CD4-positive, alpha-beta T cell (primary cell): ENCODE measurements at regions of chr10 and their contacts with region 1.

Region 1: GRCh38 chr10:98956576-98957260 is 278.9 kb downstream of the HPSE2 start:
- DNase-seq: no peak
- ATAC-seq: no peak
- H3K4me3 ChIP-seq: no peak overlapping the region
- H3K4me3 Mint-ChIP-seq: no peak overlapping the region
- H3K27ac ChIP-seq: no peak overlapping the region
- H3K27ac Mint-ChIP-seq: no peak overlapping the region
- H3K4me1 ChIP-seq: no peaks in the 10 kb centered on the region
- H3K4me1 Mint-ChIP-seq: no peaks in the 10 kb centered on the region
- H3K27me3 ChIP-seq: no peaks in the 10 kb centered on the region
- H3K27me3 Mint-ChIP-seq: no peaks in the 10 kb centered on the region
- CTCF ChIP-seq: no peak

Region 2: DNA sequence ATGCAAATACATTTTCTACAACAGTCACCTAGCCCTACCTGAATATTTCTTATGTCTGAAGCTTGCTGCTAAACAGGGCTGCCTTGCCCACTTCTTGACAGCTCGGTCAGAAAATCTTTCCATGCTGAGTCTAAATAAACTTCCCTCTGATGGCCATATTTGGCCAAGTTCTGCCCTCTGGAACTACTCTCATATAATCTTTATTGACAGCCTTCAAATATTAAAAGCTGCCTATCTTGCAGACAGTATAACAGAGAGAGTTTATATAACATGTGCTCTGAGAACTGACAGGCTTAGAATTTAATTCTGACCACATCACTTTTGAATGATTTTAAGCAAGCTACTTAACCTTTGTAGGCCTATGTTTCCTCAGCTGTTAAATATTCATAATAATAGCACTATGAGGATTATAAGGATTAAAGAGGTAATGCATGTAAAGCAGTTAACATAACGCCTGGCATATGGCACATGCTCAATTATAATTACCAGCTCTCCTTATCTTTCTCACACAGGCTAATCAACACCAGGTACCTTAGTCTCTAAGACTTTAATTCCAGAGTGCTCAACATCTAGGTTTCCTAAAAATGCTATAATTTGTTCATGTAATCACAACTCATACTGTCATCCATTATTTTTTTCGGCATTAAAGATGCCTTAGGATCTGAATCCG is 55.1 kb before region 1 on chr10:
- CTCF ChIA-PET with region 1: no interaction called
- POLR2A ChIA-PET with region 1: no interaction called
- intact Hi-C with region 1: loop called in 1 of 2 experiments (anchors 10 kb)
- DNase-seq: no peak
- ATAC-seq: no peak
- H3K4me3 ChIP-seq: no peak overlapping the region
- H3K4me3 Mint-ChIP-seq: no peak overlapping the region
- H3K27ac ChIP-seq: no peak overlapping the region
- H3K27ac Mint-ChIP-seq: no peak overlapping the region
- H3K4me1 ChIP-seq: no peaks in the 10 kb centered on the region
- H3K4me1 Mint-ChIP-seq: no peaks in the 10 kb centered on the region
- H3K27me3 ChIP-seq: no peaks in the 10 kb centered on the region
- H3K27me3 Mint-ChIP-seq: no peaks in the 10 kb centered on the region
- CTCF ChIP-seq: no peak

Region 3: GRCh38 chr10:98994030-98994429 is 37.3 kb after region 1 on chr10:
- CTCF ChIA-PET with region 1: no interaction called
- POLR2A ChIA-PET with region 1: no interaction called
- intact Hi-C with region 1: no loop called
- DNase-seq: no peak
- ATAC-seq: no peak
- H3K4me3 ChIP-seq: no peak overlapping the region
- H3K4me3 Mint-ChIP-seq: no peak overlapping the region
- H3K27ac ChIP-seq: no peak overlapping the region
- H3K27ac Mint-ChIP-seq: no peak overlapping the region
- H3K4me1 ChIP-seq: no peaks in the 10 kb centered on the region
- H3K4me1 Mint-ChIP-seq: no peaks in the 10 kb centered on the region
- H3K27me3 ChIP-seq: no peaks in the 10 kb centered on the region
- H3K27me3 Mint-ChIP-seq: no peaks in the 10 kb centered on the region
- CTCF ChIP-seq: no peak

Region 4: GRCh38 chr10:99045671-99046070 is 89.0 kb after region 1 on chr10:
- CTCF ChIA-PET with region 1: no interaction called
- POLR2A ChIA-PET with region 1: no interaction called
- intact Hi-C with region 1: no loop called
- DNase-seq: no peak
- ATAC-seq: no peak
- H3K4me3 ChIP-seq: no peak overlapping the region
- H3K4me3 Mint-ChIP-seq: no peak overlapping the region
- H3K27ac ChIP-seq: no peak overlapping the region
- H3K27ac Mint-ChIP-seq: no peak overlapping the region
- H3K4me1 ChIP-seq: no peaks in the 10 kb centered on the region
- H3K4me1 Mint-ChIP-seq: no peaks in the 10 kb centered on the region
- H3K27me3 ChIP-seq: no peaks in the 10 kb centered on the region
- H3K27me3 Mint-ChIP-seq: no peaks in the 10 kb centered on the region
- CTCF ChIP-seq: no peak